ENCODE measurements at regions of chr18 and their contacts with region 1.

Region 1: DNA sequence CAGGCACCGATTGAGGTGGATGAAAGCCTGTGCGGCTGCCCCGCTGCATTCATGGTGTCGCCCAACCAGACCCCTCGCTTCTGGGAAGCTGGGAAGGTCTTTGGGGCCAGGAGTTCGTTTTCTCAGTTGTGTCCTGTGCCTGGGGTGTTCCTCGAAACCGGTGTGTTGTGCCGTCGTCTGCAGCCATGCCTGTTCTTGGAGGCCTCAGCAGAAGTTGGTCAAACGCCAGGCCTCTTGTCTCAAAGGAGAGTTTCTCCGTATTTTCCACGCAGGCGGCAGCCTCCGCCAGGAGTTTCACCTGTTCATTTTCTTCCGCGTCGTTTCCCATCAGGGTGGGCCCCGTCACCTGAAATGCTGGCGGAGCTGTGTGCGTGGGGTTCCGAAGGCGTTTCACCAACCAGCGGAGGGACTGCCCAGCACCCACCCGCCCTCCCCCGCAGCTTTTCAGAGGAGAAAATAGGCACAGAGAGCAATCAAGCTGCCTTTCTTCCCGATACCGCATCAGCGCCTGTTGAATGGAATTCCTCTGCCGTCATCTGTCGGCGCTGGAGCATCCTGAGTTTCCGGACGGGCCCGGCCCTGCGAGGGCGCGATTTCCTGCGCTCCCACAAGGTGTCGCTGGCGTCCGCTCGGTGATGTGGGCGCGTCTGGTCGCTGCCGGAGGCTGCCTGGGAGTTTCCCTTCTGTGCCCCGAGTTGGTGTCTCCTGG is 17.0 kb upstream of the NFATC1 start:
- DNase-seq: peak; percentile 74
- ATAC-seq: peak; percentile 71
- H3K4me3 Mint-ChIP-seq: peak overlapping the region; percentile 46
- H3K27ac Mint-ChIP-seq: peak overlapping the region; percentile 50
- H3K4me1 Mint-ChIP-seq: peaks cover 26% of the 10 kb centered on the region
- H3K27me3 Mint-ChIP-seq: no peaks in the 10 kb centered on the region
- CTCF ChIP-seq: peak; percentile 81

Region 2: GRCh38 chr18:79068937-79069791 is 309.5 kb before region 1 on chr18 and contains the start of gene ATP9B:
- CTCF ChIA-PET with region 1: no interaction called
- POLR2A ChIA-PET with region 1: no interaction called
- intact Hi-C with region 1: loop called (anchors 10 kb)
- DNase-seq: peak; percentile 99
- ATAC-seq: peak; percentile 84
- H3K4me3 Mint-ChIP-seq: peak within 1 kb of the TSS; percentile 88
- H3K27ac Mint-ChIP-seq: peak within 1 kb of the TSS; percentile 95
- H3K4me1 Mint-ChIP-seq: peaks cover 30% of the 10 kb centered on the region
- H3K27me3 Mint-ChIP-seq: peaks cover 3% of the 10 kb centered on the region
- CTCF ChIP-seq: no peak
- total RNA-seq, gene ATP9B: 41.5 and 49.2 TPM in 2 replicates

Region 3: DNA sequence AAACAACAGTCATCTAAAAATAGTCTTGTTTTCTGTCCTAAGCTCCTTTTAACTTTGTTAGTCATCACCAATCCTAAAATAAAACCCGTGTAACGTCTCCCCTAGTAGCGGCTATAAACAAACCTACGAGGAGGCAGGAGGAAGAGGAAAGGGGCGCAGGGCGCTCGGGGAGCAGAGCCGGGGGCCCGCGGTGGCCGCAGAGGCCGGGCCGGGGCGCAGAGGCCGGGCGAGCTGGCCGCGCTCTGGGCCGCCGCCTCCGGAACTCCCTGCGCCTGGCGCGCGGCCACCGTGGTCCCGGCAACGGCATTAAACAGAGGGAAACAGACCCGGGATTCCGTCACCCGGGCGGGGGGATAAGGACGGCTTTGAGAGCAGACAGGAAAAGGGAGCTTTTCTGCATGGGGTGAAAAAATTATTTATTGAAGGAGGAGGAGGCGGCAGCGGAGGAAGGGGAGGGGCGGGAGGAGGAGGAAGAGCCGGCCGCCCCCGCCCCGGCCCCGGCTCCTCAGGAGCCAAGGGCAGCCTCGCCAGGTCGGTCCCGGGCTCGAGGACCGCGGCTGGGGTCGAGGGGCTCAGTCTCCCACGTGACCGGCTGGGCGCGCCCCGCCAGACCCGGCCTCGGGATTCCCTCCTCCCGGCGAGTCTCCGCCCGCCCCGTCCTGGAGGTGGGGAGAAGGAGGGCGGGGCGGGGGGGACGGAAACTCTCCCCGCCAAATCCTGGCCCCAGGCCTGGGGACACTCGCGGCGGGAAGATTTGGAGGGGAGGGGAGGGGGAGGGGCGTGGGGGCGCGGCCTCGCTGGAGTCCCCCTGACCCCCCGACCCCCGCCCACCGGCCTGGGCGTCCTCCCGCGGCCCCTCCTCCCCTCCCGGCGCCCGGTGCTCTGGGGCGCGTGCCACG is 15.2 kb after region 1 on chr18:
- CTCF ChIA-PET with region 1: interaction called, 16 read pairs
- POLR2A ChIA-PET with region 1: interaction called, 6 read pairs
- intact Hi-C with region 1: loop called (anchors 1 kb)
- DNase-seq: peak; percentile 52
- ATAC-seq: peak; percentile 13
- H3K4me3 Mint-ChIP-seq: peak overlapping the region; percentile 84
- H3K27ac Mint-ChIP-seq: peak overlapping the region; percentile 71
- H3K4me1 Mint-ChIP-seq: peaks cover 35% of the 10 kb centered on the region
- H3K27me3 Mint-ChIP-seq: no peaks in the 10 kb centered on the region
- CTCF ChIP-seq: no peak

Region 4: DNA sequence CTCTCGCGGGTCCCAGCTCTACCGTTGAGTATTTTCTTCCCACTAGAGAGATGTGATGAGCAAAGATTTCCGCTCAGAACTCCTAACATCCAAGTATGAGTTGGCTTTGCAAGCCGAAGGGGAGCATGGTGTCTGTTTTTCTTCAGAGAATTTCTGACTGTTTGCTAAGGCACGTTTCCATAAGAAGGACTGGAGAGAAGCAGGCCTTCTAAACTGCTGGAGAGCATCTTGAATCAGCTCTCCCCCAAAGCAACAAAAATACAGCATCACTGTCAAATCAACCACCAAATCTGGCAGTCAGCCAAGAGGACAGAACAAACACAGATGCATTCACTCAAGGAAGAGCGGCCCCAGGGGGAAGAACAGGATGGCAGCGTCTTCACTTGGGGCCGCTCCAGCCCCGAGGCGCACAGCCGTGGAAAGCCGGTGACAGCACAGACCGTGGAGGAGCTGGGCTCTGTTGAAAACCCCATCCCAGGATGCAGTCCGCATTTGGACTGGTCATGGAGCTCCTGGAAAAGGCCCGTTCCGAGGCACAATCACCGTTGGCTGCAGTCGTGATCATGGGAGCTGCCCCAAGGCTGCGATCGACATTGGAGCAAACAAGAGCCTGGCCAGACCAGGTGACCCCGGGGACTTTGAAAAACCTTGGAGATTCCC is 118.4 kb after region 1 on chr18:
- CTCF ChIA-PET with region 1: no interaction called
- POLR2A ChIA-PET with region 1: no interaction called
- intact Hi-C with region 1: no loop called
- DNase-seq: no peak
- ATAC-seq: peak; percentile 79
- H3K4me3 Mint-ChIP-seq: peak overlapping the region; percentile 64
- H3K27ac Mint-ChIP-seq: peak overlapping the region; percentile 80
- H3K4me1 Mint-ChIP-seq: peaks cover 33% of the 10 kb centered on the region
- H3K27me3 Mint-ChIP-seq: no peaks in the 10 kb centered on the region
- CTCF ChIP-seq: no peak

Region 5: DNA sequence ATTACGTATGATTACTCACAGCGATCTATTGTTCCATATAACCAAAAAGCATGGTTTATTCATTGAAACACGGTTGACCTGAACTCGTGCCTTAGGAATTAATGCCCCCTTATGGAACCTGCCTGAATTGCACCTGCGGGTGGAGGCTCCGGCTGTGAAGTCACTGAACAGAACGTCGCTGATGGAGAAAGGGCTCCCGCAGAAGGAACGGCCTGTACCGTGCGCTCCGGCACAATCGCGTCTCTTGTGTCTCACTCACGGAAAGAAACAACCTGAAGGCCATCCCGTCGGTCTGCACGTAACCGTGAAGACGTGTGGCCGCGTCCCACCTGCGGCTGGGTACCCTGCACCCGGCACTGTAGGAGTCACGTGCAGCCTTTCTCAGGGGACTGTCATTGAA is 150.2 kb after region 1 on chr18:
- CTCF ChIA-PET with region 1: interaction called, 99 read pairs
- POLR2A ChIA-PET with region 1: interaction called, 5 read pairs
- intact Hi-C with region 1: loop called (anchors 1 kb)
- DNase-seq: peak; percentile 54
- ATAC-seq: peak; percentile 43
- H3K4me3 Mint-ChIP-seq: no peak overlapping the region
- H3K27ac Mint-ChIP-seq: no peak overlapping the region
- H3K4me1 Mint-ChIP-seq: peaks cover 19% of the 10 kb centered on the region
- H3K27me3 Mint-ChIP-seq: no peaks in the 10 kb centered on the region
- CTCF ChIP-seq: peak; percentile 27

Region 6: GRCh38 chr18:79819968-79820351 is 441.3 kb after region 1 on chr18:
- CTCF ChIA-PET with region 1: no interaction called
- POLR2A ChIA-PET with region 1: no interaction called
- intact Hi-C with region 1: loop called (anchors 2 kb)
- DNase-seq: peak; percentile 42
- ATAC-seq: peak; percentile 94
- H3K4me3 Mint-ChIP-seq: peak overlapping the region; percentile 73
- H3K27ac Mint-ChIP-seq: peak overlapping the region; percentile 84
- H3K4me1 Mint-ChIP-seq: peaks cover 36% of the 10 kb centered on the region
- H3K27me3 Mint-ChIP-seq: peaks cover 3% of the 10 kb centered on the region
- CTCF ChIP-seq: no peak

Region 7: DNA sequence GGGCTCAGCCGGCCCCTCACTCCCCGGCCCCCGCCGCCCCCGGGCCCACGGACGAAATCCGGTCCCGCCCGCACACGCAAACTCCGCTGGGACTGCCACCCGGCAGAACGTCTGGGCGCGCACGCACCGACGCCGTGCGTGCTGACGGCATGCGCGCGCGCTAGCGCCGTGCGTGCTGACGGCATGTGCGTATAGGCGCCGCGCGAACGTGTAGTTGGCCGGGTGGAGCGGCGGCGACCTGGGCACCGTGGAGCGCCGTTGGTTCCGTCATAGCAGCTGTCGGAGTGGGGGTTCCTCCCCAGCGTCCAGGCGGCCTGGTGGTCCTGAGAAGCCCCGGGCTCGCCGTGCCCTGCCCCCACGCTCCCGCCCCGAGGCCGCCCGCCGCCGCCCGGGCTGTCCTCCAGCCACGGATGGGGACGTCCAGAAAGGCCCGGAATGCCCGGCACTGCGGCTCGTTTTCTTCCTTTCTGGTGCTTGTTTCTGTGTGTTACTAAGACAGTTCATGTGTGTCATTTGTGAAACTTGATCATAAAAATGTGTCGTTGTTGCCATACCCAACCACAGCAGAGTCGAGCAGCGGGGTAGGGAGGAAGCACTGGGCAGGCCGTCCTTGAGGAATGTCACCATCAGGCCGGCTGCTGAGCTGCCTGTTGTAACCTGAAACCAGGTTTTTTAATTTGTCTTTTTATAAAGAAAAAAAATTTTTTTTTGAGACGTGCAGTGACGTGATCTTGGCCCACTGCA is 609.9 kb after region 1 on chr18 and contains the start of gene TXNL4A:
- CTCF ChIA-PET with region 1: no interaction called
- POLR2A ChIA-PET with region 1: no interaction called
- intact Hi-C with region 1: loop called (anchors 5 kb)
- DNase-seq: peak; percentile 87
- ATAC-seq: peak; percentile 92
- H3K4me3 Mint-ChIP-seq: peak within 1 kb of the TSS; percentile 91
- H3K27ac Mint-ChIP-seq: peak within 1 kb of the TSS; percentile 92
- H3K4me1 Mint-ChIP-seq: peaks cover 34% of the 10 kb centered on the region
- H3K27me3 Mint-ChIP-seq: no peaks in the 10 kb centered on the region
- CTCF ChIP-seq: no peak
- total RNA-seq, gene TXNL4A: 94.7 and 96.9 TPM in 2 replicates

Region 8: GRCh38 chr18:80157708-80158343 is 779.1 kb after region 1 on chr18:
- CTCF ChIA-PET with region 1: no interaction called
- POLR2A ChIA-PET with region 1: no interaction called
- intact Hi-C with region 1: loop called (anchors 1 kb)
- DNase-seq: peak; percentile 54
- ATAC-seq: peak; percentile 75
- H3K4me3 Mint-ChIP-seq: no peak overlapping the region
- H3K27ac Mint-ChIP-seq: no peak overlapping the region
- H3K4me1 Mint-ChIP-seq: peaks cover 9% of the 10 kb centered on the region
- H3K27me3 Mint-ChIP-seq: peaks cover 1% of the 10 kb centered on the region
- CTCF ChIP-seq: peak; percentile 92

Measured in activated B cell treated with CpG ODN at 0.5 μM for 24 hours (primary cell).